HepG2 (cell line): ENCODE measurements at regions of chr6 and their contacts with region 1.

Region 1: GRCh38 chr6:123829302-123829953 is 25.8 kb downstream of the NKAIN2 start:
- DNase-seq: no peak
- ATAC-seq: no peak
- H3K4me3 ChIP-seq: no peak overlapping the region
- H3K27ac ChIP-seq: no peak overlapping the region
- H3K4me1 ChIP-seq: no peaks in the 10 kb centered on the region
- H3K27me3 ChIP-seq: no peaks in the 10 kb centered on the region
- CTCF ChIP-seq: no peak
- EP300 ChIP-seq: no peak
- POLR2A ChIP-seq: no peak
- RAD21 ChIP-seq: no peak

Region 2: DNA sequence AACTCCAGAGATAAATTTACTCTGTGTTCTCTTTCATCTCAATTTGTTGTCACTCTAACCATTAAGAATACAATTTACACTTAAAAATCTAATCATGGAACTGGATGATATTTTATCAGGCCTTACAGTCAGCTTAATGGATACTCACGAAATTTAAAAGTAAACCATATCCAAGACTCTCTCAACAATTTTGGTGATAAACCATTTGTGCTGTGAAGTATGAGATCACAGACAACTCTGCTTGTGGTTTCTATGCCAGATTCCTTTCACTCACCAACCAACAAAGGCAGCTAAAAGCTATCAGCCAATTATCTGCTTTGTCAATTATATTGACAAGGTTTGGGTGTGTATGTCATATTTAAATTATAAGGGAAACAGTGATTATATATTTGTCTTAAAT is 348.4 kb before region 1 on chr6:
- CTCF ChIA-PET with region 1: no interaction called
- POLR2A ChIA-PET with region 1: no interaction called
- in situ Hi-C with region 1: no loop called
- intact Hi-C with region 1: no loop called
- DNase-seq: no peak
- ATAC-seq: no peak
- H3K4me3 ChIP-seq: no peak overlapping the region
- H3K27ac ChIP-seq: no peak overlapping the region
- H3K4me1 ChIP-seq: no peaks in the 10 kb centered on the region
- H3K27me3 ChIP-seq: no peaks in the 10 kb centered on the region
- CTCF ChIP-seq: no peak
- EP300 ChIP-seq: no peak
- POLR2A ChIP-seq: no peak
- RAD21 ChIP-seq: no peak

Region 3: DNA sequence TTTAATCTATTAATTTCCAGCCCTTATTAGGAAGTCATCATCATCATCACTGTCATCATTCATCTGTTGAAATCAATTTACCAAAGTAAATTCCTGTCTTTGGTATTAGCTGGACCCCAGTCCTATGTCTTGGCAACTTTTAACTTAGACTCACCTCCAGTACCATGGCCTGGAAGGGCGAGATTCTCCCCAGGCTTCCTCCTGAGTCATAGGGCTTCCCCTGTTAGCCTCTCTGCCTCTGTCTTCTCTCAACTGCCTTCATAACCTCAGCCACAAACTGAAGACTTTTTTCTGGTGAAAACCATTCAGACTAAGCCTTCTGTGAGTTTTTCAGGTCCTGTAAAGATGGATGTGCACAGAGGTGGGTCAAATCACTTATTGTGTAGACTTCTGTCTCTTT is 69.2 kb after region 1 on chr6:
- CTCF ChIA-PET with region 1: no interaction called
- POLR2A ChIA-PET with region 1: no interaction called
- in situ Hi-C with region 1: no loop called
- intact Hi-C with region 1: no loop called
- DNase-seq: no peak
- ATAC-seq: no peak
- H3K4me3 ChIP-seq: no peak overlapping the region
- H3K27ac ChIP-seq: no peak overlapping the region
- H3K4me1 ChIP-seq: no peaks in the 10 kb centered on the region
- H3K27me3 ChIP-seq: no peaks in the 10 kb centered on the region
- CTCF ChIP-seq: no peak
- EP300 ChIP-seq: no peak
- POLR2A ChIP-seq: no peak
- RAD21 ChIP-seq: no peak

Region 4: DNA sequence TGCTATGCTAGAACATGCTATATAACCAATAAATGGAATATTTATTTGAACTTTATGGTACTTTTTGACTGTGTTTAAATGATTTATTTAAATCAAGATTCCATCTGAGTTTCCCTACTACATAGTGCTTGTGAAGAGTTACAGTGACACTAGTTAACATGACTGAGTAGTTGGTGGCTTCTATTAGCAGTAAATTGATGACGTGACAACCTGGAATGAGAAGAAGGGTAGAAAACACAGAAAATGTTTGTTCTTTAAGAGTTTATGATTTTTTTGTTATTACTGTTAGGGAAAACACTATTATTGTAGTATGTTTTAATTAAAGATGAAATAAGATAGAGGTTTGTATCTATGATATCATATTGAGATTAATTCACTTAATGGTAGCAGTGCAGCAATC is 276.7 kb after region 1 on chr6:
- CTCF ChIA-PET with region 1: no interaction called
- POLR2A ChIA-PET with region 1: no interaction called
- in situ Hi-C with region 1: no loop called
- intact Hi-C with region 1: loop called (anchors 10 kb)
- DNase-seq: no peak
- ATAC-seq: no peak
- H3K4me3 ChIP-seq: no peak overlapping the region
- H3K27ac ChIP-seq: no peak overlapping the region
- H3K4me1 ChIP-seq: no peaks in the 10 kb centered on the region
- H3K27me3 ChIP-seq: no peaks in the 10 kb centered on the region
- CTCF ChIP-seq: no peak
- EP300 ChIP-seq: no peak
- POLR2A ChIP-seq: no peak
- RAD21 ChIP-seq: no peak